Activated CD4-positive, alpha-beta memory T cell treated with anti-CD3 and anti-CD28 coated beads for 36 hours (primary cell): ENCODE measurements at regions of chr6 and their contacts with region 1.

Region 1: DNA sequence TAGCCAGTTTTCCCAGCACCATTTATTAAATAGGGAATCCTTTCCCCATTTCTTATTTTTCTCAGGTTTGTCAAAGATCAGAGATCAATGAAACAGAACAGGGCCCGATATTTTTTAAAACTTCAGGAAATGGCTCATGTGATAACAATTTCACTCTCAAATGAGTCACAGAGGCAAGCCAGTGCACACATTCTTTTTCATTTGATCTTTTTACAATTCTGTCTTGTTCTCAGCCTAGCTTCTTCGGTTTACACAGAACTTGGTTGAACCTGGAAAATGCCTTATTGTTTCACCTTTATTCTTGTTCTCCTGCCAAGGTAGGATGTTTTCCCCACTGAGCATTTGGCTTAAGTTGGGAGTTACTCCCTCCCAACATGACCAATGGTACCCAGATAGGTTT is 258.9 kb downstream of the COL12A1 start:
- DNase-seq: no peak
- H3K4me3 Mint-ChIP-seq: no peak overlapping the region
- H3K27ac Mint-ChIP-seq: no peak overlapping the region
- H3K4me1 Mint-ChIP-seq: no peaks in the 10 kb centered on the region
- H3K27me3 Mint-ChIP-seq: no peaks in the 10 kb centered on the region

Region 2: DNA sequence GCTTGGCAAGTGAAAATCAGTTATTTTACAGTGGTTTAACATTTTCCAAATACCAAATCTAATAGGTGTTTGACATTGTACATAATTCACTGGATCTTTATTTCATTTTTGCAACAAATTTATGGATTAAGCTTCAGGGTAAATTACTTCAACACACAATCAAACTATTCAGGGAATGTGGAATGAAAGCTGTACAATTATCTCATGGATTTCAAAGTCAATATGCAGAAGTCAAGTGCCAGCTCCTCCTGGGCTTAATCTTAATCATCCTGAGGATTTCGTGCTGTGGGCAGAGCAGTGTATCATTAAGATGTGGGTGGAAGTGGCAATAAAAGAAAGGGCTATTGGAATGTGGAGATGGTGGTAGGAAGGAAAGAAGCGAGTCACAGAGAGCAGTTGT is 289.9 kb before region 1 on chr6:
- CTCF ChIA-PET with region 1: no interaction called
- POLR2A ChIA-PET with region 1: no interaction called
- intact Hi-C with region 1: no loop called
- DNase-seq: no peak
- H3K4me3 Mint-ChIP-seq: no peak overlapping the region
- H3K27ac Mint-ChIP-seq: no peak overlapping the region
- H3K4me1 Mint-ChIP-seq: no peaks in the 10 kb centered on the region
- H3K27me3 Mint-ChIP-seq: no peaks in the 10 kb centered on the region

Region 3: GRCh38 chr6:74925683-74926082 is 21.3 kb before region 1 on chr6:
- CTCF ChIA-PET with region 1: no interaction called
- POLR2A ChIA-PET with region 1: no interaction called
- intact Hi-C with region 1: loop called (anchors 1 kb)
- DNase-seq: no peak
- H3K4me3 Mint-ChIP-seq: no peak overlapping the region
- H3K27ac Mint-ChIP-seq: no peak overlapping the region
- H3K4me1 Mint-ChIP-seq: no peaks in the 10 kb centered on the region
- H3K27me3 Mint-ChIP-seq: no peaks in the 10 kb centered on the region